GM18951 (cell line): ENCODE measurements at regions of chr9 and their contacts with region 1.

Region 1: GRCh38 chr9:21455320-21455719 is 15.1 kb downstream of the IFNA1 start:
- POLR2A ChIP-seq: no peak

Region 2: DNA sequence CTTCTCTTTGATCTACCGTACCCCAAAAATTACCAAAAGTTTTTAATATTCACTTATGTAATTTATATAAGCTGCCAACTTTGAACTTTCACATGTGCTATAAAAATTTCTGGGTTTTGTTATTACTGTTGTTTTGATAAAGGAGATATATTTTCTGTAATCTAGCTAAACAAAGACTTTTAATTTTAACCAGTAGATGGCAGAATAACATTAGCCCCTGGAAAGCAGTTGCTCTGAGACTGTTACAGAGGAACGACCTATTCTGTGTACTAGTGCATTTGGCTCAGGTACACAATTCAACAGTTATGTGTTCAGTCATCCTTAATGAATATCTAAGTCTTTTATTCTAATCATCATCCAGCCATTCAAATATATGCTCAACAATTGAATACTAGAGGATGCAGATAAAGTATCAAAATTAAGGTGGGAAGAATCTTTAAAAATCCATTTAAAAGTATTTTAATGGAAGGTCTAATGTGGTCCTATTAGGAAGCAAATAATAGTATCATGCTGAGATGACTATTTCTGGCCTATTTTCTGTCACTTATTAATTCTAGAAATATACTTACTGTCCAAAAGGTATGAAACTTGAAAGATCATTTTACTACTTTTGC is 128.7 kb before region 1 on chr9:
- in situ Hi-C with region 1: loop called (anchors 10 kb)
- POLR2A ChIP-seq: no peak